Endothelial cell of umbilical vein (primary cell): ENCODE measurements at regions of chr14 and their contacts with region 1.

Region 1: DNA sequence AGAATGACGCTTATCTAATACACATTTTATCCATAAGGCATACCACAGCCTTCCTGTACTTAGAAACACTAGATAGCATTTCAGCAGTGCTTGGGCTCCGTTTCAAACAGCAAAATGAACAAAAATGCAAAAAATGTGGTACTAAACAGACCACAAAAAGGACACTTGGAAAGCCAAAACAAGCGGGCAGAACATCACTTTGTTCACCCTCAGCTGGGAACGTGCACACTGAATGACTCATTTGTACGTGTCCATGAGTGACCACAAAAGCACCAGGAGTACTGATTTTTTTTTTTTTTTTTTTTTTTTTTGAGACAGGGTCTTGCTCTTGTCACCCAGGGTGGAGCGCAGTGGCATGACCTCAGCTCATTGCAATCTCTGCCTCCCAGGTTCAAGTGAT is 8.9 kb upstream of the FOXN3 start:
- DNase-seq: peak; percentile 55
- H3K4me3 ChIP-seq: no peak overlapping the region
- H3K27ac ChIP-seq: peak overlapping the region; percentile 60
- H3K4me1 ChIP-seq: peaks cover 23% of the 10 kb centered on the region
- H3K27me3 ChIP-seq: no peaks in the 10 kb centered on the region
- CTCF ChIP-seq: no peak
- POLR2A ChIP-seq: no peak

Region 2: DNA sequence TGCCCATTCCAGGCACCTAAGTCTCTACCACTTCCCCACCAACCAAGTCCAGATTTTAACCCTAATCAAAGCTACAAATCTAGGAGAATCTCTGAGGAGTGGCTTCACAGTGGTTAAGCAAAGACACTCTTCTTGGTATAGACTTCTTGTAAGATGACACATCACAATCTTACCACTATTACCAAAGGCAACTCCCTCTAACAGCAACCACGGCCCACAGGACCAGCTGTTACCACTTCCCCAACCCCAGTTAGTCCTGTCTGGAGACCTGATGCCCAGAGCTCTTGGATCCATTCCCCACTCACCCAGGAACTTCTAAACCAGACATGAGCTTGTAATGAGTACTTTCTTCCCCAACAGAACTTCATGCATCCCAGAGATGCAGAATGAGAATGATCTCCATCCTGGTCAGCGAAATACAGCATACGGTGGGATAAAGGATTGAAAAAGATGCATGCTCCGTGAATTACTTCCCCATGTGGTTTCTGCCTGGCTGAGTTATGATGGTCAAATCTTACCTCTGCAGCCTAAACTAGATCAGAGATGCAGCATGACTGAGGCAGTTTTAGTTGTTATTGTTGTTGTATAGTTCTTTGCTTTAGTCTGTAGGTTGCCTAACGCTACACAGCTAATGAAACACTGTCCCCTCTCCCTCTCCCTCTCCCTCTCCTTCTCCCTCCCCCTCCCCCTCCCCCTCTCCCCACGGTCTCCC is 78.8 kb after region 1 on chr14:
- CTCF ChIA-PET with region 1: no interaction called
- POLR2A ChIA-PET with region 1: no interaction called
- dilution Hi-C with region 1: no loop called
- intact Hi-C with region 1: loop called (anchors 5 kb)
- DNase-seq: no peak
- H3K4me3 ChIP-seq: no peak overlapping the region
- H3K27ac ChIP-seq: no peak overlapping the region
- H3K4me1 ChIP-seq: peaks cover 17% of the 10 kb centered on the region
- H3K27me3 ChIP-seq: no peaks in the 10 kb centered on the region
- CTCF ChIP-seq: no peak
- POLR2A ChIP-seq: no peak